ENCODE measurements at regions of chr11 and their contacts with region 1.

Region 1: GRCh38 chr11:122628810-122629555 is 26.5 kb upstream of the UBASH3B start:
- DNase-seq: peak; percentile 71
- H3K4me3 ChIP-seq: no peak overlapping the region
- H3K27ac ChIP-seq: no peak overlapping the region
- H3K4me1 ChIP-seq: peaks cover 6% of the 10 kb centered on the region
- H3K27me3 ChIP-seq: peaks cover 0 to 2% of the 10 kb centered on the region in 2 experiments
- CTCF ChIP-seq: peak; percentile 92 to 94
- POLR2A ChIP-seq: no peak

Region 2: DNA sequence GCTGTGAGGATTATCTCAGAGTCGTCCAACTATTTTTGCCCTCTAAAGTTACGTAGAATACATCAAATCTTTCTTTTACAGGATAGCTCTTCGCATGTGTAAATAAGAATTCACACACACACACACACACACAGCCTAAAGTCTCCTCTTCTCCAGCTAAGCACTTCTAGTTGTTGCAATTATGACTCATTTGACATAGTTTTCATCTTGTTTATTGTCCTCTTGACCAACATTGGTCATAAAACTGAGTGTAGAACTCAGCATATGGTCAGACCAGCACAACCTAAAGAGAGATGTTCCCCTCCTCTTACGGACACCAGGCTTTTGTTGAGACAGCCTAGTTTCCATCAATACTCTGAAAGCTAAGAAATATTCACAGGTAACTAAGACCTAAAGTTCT is 747.2 kb before region 1 on chr11:
- CTCF ChIA-PET with region 1: no interaction called
- POLR2A ChIA-PET with region 1: no interaction called
- dilution Hi-C with region 1: no loop called
- intact Hi-C with region 1: no loop called
- DNase-seq: no peak
- H3K4me3 ChIP-seq: no peak overlapping the region
- H3K27ac ChIP-seq: no peak overlapping the region
- H3K4me1 ChIP-seq: no peaks in the 10 kb centered on the region
- H3K27me3 ChIP-seq: peaks cover 2 to 6% of the 10 kb centered on the region in 2 experiments
- CTCF ChIP-seq: no peak
- POLR2A ChIP-seq: no peak

Region 3: DNA sequence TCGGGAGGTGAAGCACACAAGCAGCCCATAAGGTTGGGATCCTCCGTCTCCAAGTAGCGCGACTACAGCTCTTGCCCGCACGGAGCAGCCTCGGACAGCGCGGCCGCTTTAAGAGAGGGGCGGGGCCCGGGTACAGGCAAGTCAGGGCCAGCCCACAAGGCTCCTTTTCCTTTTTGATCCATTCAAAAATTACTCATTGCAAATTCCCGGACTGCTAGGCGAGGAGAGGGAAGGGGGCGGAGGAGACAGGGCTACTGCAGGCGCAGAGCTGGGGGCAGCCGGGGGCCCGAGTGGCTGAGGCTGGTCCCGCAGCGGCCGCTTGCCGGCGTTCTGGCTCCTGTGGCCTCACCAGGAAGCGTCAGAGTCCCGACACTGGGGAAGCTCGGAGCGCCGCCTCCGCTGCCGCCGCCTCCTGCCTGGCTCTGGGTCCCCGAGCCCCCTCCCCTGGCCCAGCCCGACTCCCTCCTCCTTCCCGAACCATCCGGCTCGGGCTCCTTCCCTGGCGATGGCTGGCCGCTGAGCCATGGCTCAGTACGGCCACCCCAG is 26.6 kb after region 1 on chr11 and contains the start of gene UBASH3B:
- CTCF ChIA-PET with region 1: interaction called, 26 read pairs
- POLR2A ChIA-PET with region 1: interaction called, 4 read pairs
- dilution Hi-C with region 1: no loop called
- intact Hi-C with region 1: loop called (anchors 1 kb)
- DNase-seq: peak; percentile 90
- H3K4me3 ChIP-seq: peak within 1 kb of the TSS; percentile 47 to 74 (median 62)
- H3K27ac ChIP-seq: peak within 1 kb of the TSS; percentile 83
- H3K4me1 ChIP-seq: peaks cover 17% of the 10 kb centered on the region
- H3K27me3 ChIP-seq: no peaks in the 10 kb centered on the region
- CTCF ChIP-seq: no peak
- POLR2A ChIP-seq: peak; percentile 96
- total RNA-seq, gene UBASH3B: 38.1 and 38.8 TPM in 2 replicates

Region 4: GRCh38 chr11:122769126-122769780 is 140.3 kb after region 1 on chr11:
- CTCF ChIA-PET with region 1: interaction called, 11 read pairs
- POLR2A ChIA-PET with region 1: no interaction called
- dilution Hi-C with region 1: no loop called
- intact Hi-C with region 1: no loop called
- DNase-seq: no peak
- H3K4me3 ChIP-seq: no peak overlapping the region
- H3K27ac ChIP-seq: no peak overlapping the region
- H3K4me1 ChIP-seq: peaks cover 19% of the 10 kb centered on the region
- H3K27me3 ChIP-seq: no peaks in the 10 kb centered on the region
- CTCF ChIP-seq: no peak
- POLR2A ChIP-seq: no peak

Region 5: DNA sequence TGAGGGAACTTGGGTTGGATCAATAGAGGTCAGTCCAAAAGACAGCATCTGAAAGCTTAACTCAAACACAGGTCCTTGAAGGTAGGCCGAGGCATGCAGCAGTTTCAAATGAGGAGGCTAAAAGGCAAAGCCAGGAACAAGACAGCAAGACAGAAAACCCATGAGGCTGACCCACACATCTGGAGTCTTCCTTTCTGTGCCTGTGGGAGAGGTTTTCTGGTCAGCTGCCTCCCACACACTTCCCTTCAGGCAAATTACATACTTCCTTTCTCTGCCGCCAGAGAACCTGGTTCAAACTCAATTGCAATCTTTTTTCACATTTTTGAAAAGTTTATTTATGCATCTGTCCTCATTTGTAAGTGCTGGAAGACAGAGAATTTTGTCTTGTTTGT is 179.5 kb after region 1 on chr11:
- CTCF ChIA-PET with region 1: interaction called, 15 read pairs
- POLR2A ChIA-PET with region 1: no interaction called
- dilution Hi-C with region 1: no loop called
- intact Hi-C with region 1: no loop called
- DNase-seq: peak; percentile 42
- H3K4me3 ChIP-seq: no peak overlapping the region
- H3K27ac ChIP-seq: no peak overlapping the region
- H3K4me1 ChIP-seq: no peaks in the 10 kb centered on the region
- H3K27me3 ChIP-seq: no peaks in the 10 kb centered on the region
- CTCF ChIP-seq: no peak
- POLR2A ChIP-seq: no peak

Region 6: DNA sequence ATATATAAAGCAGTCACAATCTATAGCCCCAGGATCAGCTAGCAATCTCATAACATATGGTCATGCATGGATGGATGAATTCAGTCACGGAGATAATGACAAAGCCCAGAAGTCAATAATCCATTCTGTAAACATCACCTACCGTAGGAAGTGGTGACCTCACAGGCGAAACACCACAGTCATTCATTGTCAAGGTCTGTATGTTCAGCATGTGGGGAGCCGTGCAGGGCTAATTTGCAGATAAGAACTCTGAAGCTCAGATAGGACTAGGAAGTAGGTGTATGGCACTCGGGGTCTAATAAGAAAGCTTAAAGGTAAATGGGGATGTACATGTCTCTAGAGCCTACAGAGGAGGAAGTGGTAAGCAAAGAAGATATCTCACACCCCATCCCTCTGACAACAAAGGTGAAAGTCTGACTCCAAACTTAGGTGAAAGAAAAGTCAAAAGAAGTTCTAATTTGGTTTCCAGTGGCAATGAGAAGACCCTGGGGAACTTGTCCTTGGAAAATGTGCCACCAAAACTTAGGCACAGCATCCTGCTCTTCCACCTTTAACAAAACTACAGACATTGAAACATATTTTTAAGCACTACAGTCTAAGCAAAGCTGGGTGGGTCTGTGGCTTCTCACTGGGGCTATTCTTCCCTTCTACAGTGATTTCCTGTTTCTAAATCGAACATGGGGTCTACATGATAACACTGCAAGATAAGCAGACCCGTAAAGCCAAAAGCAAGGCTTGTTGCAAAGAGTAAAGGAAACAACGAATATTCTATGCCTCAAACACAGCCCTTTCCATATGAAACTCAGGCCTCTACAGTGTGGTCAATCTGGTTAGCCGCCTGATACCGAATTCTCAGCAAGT is 214.5 kb after region 1 on chr11:
- CTCF ChIA-PET with region 1: interaction called, 720 read pairs
- POLR2A ChIA-PET with region 1: no interaction called
- dilution Hi-C with region 1: no loop called
- intact Hi-C with region 1: no loop called
- DNase-seq: no peak
- H3K4me3 ChIP-seq: no peak overlapping the region
- H3K27ac ChIP-seq: no peak overlapping the region
- H3K4me1 ChIP-seq: no peaks in the 10 kb centered on the region
- H3K27me3 ChIP-seq: peaks cover 2 to 10% of the 10 kb centered on the region in 2 experiments
- CTCF ChIP-seq: no peak
- POLR2A ChIP-seq: no peak

Region 7: DNA sequence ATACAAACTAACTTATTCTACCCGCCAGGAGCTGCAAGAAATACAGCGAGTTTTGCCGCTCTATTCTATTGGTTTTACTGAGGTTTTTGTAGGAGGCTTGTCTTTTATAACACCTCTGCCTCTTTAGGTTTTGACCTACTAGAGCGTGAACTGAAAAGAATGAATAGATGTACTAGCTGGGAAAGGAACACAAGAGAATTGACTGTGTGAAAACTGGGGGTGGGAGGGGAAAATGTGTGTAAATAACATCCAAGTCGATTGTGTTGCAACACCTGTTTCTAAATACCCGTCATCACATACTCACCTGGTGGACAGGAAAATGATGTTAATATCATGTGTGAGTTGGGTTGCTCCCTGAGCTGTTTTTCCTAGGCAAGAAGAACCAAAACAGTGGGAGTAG is 240.6 kb after region 1 on chr11:
- CTCF ChIA-PET with region 1: interaction called, 40 read pairs
- POLR2A ChIA-PET with region 1: no interaction called
- dilution Hi-C with region 1: no loop called
- intact Hi-C with region 1: no loop called
- DNase-seq: no peak
- H3K4me3 ChIP-seq: no peak overlapping the region
- H3K27ac ChIP-seq: no peak overlapping the region
- H3K4me1 ChIP-seq: no peaks in the 10 kb centered on the region
- H3K27me3 ChIP-seq: peaks cover 0 to 2% of the 10 kb centered on the region in 2 experiments
- CTCF ChIP-seq: no peak
- POLR2A ChIP-seq: no peak